Activated naive CD4-positive, alpha-beta T cell treated with anti-CD3 and anti-CD28 coated beads, Interleukin-2, amount 10 ng/mL, durations not matched to agents 7 days and 5 days (primary cell): ENCODE measurements at regions of chr17 and their contacts with region 1.

Region 1: DNA sequence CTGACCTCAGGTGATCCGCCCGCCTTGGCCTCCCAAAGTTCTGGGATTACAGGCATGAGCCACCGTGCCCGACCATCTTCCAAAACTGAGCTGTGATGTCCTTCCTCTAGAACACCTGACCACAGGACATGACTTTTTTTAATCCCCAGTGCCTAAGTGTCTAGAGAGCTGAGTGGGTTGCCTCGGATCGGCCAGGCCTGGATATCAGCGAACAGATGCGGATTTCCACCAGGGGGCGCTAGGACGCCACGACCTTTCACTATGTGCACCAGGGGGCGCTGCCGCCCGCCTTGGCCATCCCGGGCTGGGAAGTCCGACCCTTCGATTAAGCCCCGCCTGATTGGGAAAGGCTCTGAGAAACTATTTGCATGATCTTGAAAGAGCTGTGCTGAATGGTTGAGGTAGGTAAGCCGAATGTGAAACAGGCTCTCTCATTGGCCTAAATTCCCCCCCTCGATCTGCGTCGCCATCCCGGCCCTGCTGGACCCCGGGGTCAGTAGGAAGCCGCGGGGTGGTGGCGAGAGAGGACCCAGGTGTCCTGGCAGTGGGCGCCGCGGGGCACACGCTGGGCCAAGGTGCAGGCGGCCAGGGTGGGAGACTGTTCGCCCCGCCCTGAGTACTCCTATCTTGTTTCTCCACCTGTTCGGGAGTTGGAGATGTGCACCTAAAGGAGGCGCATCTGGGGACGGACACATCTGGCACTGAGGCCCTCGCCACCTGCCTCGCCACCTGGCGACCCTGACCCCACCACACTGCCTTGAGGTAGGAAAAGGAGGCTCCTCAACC is at the start of gene ACBD4:
- DNase-seq: peak; percentile 97
- H3K4me3 Mint-ChIP-seq: peak within 1 kb of the TSS; percentile 91
- H3K27ac Mint-ChIP-seq: peak within 1 kb of the TSS; percentile 74
- H3K4me1 Mint-ChIP-seq: peaks cover 23% of the 10 kb centered on the region
- H3K27me3 Mint-ChIP-seq: peaks cover 16% of the 10 kb centered on the region

Region 2: GRCh38 chr17:44758414-44759085 is 376.8 kb before region 1 on chr17 and contains the start of gene ADAM11:
- CTCF ChIA-PET with region 1: no interaction called
- DNase-seq: peak; percentile 33
- H3K4me3 Mint-ChIP-seq: peak within 1 kb of the TSS; percentile 31
- H3K27ac Mint-ChIP-seq: no peak within 1 kb of the TSS
- H3K4me1 Mint-ChIP-seq: no peaks in the 10 kb centered on the region
- H3K27me3 Mint-ChIP-seq: peaks cover 80% of the 10 kb centered on the region

Region 3: DNA sequence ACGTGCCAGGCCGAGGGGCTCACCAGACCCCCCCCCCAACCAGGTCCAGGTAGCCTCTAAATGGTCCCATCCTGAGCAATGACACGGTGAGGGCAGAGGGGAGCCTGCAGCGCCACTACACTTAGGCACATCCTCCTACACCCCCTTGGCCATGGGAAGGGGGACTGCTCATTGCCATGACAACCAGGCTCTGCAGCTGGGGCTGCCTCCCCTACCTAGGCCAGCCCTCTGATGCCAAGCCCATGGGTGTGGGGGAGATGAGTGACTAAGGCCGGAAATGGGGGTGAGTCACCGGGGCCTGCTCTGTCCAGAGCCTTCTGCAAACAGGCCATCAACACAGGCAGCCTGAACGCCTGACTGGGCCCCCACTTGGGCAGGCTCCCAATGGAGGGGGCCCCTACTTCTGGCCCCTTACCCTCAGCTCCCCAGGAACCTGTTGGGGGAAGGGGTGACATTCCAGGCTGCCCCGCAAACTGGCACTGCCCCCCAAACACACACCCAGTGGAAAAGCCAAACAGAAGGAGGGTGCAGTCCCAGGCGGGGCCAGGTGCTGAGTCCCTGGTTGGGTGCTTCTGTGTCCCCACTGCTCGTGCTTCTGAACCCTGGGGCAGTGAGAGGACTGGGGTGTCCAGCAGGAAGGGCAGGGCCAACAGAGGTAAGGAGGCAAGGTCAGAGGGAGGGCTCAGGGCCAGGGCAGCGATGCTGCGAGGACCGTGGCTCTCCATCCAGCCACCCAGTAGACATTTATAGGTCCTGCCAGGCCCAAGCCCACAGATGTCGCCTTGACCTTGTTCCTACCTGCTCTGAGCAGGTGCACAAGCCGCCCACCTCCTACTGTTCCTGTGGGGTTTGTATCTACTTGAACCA is 11.2 kb before region 1 on chr17:
- CTCF ChIA-PET with region 1: interaction called, 17 read pairs
- DNase-seq: no peak
- H3K4me3 Mint-ChIP-seq: no peak overlapping the region
- H3K27ac Mint-ChIP-seq: no peak overlapping the region
- H3K4me1 Mint-ChIP-seq: no peaks in the 10 kb centered on the region
- H3K27me3 Mint-ChIP-seq: peaks cover 36% of the 10 kb centered on the region

Region 4: GRCh38 chr17:45161019-45161825 is 25.8 kb after region 1 on chr17:
- CTCF ChIA-PET with region 1: interaction called, 172 read pairs
- DNase-seq: peak; percentile 98
- H3K4me3 Mint-ChIP-seq: peak overlapping the region; percentile 93
- H3K27ac Mint-ChIP-seq: peak overlapping the region; percentile 95
- H3K4me1 Mint-ChIP-seq: peaks cover 48% of the 10 kb centered on the region
- H3K27me3 Mint-ChIP-seq: no peaks in the 10 kb centered on the region

Region 5: GRCh38 chr17:45184144-45184543 is 48.8 kb after region 1 on chr17:
- CTCF ChIA-PET with region 1: interaction called, 14 read pairs
- DNase-seq: no peak
- H3K4me3 Mint-ChIP-seq: no peak overlapping the region
- H3K27ac Mint-ChIP-seq: no peak overlapping the region
- H3K4me1 Mint-ChIP-seq: no peaks in the 10 kb centered on the region
- H3K27me3 Mint-ChIP-seq: peaks cover 21% of the 10 kb centered on the region

Region 6: GRCh38 chr17:45197555-45198334 is 62.4 kb after region 1 on chr17:
- CTCF ChIA-PET with region 1: interaction called, 193 read pairs
- DNase-seq: peak; percentile 90
- H3K4me3 Mint-ChIP-seq: no peak overlapping the region
- H3K27ac Mint-ChIP-seq: no peak overlapping the region
- H3K4me1 Mint-ChIP-seq: peaks cover 6% of the 10 kb centered on the region
- H3K27me3 Mint-ChIP-seq: no peaks in the 10 kb centered on the region